Left cardiac atrium (tissue), 4 donors: ENCODE measurements at regions of chr4 and their contacts with region 1.

Region 1: DNA sequence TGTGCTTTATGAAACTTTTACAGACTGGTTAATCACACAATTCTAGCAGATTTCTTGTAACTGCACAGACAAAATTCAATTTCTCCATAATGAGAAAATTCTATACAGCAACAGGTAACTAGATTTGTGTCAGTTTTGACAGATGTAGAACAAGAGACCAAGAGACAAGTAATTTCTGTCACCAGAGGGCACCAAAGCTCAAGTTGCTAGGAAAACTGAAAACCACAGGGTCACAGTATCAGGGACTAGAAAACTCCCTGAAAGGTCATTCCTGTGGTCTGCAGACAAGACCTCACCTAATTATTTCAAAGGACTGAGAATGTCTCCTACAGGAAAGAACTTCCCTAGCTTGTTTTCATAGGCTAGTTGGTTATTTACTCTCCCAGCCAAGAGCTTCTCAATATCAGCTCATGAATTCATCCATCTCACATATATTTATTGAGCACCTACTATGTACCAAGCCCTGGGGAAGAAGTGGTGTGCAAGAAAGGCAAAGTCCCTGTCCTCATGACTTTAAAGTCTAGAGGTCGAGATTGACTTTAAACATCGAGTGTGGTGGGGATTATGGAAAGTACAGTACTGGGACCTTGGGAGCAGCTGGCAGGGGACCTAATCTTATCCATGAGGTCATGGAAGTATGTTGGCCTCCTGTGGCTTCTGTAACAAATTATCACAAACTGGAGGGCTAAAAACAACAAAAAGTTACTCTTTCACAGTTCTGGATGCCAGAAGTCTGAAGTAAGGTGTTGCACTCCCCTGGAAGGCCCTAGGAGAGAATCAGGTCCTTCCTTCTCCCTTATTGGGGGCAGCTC is 47.8 kb upstream of the SETD7 start:
- DNase-seq: no peak
- ATAC-seq: peak; percentile 51 to 70

Region 2: DNA sequence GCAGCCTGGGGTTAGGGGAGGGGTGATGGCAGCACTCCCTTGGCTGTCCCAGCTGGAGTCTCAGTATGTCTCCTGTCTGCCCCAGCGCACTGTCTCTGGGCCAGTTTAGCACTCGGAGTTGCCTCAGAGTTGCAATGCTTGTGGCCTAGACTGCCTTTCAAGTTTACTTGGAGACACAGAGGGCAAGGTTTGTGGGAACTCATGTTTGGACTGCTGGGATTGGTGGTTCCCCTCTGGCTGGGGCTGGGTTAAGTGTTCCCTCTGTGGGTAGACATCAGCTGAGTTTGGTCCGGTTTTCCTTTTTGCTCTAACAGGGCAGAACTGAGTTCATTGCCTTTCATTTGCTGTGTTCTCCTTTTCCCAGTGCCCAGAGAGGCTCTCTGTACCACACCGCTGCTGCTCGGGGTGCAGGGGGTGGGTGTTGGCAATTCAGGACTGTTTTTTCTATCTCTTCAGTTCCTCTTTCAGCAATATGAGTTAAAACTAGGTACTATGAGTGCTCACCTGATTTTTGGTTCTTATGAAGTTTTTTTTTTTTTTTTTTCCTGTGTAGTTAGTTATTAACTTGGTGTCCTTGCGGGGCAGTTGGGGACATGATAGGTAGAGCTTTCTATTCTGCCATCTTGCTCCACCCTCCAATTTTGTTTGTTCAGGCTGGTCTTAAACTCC is 132.7 kb before region 1 on chr4:
- intact Hi-C with region 1: no loop called
- DNase-seq: no peak
- ATAC-seq: no peak

Region 3: DNA sequence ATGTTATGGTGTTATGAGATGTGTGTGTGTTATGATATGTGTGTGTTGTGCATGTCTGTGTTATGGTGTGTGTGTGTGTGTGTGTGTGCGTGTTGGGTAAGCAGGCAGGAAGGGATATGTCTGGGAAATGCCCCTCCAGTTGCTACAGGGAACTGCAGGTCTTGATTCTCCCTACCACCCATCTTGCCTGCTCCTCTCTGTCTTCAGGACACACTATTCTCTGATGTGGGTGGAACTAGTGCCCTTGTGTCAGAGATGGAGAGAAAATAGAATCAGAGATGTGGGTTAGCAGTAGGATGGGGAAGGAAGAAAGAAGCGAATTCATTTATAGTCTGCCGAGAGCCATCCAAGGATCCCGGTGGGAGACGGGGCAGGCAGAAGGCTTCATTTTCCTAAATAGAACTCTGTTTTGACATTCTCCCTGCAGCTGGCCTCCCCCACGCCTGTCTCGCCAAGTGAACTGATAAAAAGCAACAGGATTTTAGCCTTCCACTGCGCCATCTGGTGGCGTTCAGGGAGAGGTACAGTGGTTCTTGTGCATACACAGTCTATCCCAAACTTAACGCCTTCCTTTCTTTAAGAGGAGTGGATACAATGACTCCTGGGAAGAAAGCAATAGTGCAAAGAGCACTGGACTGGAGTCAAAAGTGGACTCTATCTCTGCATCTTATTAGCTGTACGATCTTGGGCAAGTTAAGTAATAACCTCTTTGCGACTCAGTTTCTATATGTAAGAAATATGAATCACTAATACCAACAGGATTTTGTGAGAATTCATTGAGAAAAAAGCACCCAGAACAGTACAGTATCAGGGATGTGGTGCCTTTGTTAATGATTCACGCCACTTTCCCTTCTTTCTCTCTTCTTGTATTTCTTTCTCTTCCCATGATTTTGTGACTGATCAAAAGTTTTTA is 47.8 kb after region 1 on chr4:
- intact Hi-C with region 1: loop called (anchors 1 to 5 kb)
- DNase-seq: peak; percentile 90
- ATAC-seq: peak; percentile 89 to 92

Region 4: DNA sequence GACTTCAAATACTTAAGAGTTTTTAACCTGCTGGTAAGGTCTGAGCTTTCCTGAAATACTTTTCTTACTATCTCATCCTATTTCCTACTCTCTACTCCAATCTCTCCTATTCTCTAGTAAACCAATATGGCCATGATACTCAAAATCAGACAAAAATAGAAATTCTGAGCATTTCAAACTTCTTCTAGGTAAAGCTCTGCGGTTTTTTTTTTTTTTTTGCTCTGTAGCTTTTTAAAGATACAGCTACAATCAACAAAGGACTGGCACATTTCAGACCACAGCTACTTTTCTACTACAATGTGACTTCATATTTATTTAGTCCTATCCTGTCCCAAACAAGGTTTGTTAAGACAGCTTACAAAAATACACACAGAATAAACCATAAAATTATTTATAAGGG is 519.1 kb after region 1 on chr4:
- intact Hi-C with region 1: loop called in 1 of 2 experiments (anchors 5 kb)
- DNase-seq: no peak
- ATAC-seq: no peak